GM12878 (cell line): ENCODE measurements at regions of chr10 and their contacts with region 1.

Region 1: GRCh38 chr10:102641880-102642735 is 2.2 kb upstream of the TRIM8 start:
- DNase-seq: peak; percentile 90
- ATAC-seq: peak; percentile 69
- H3K4me3 ChIP-seq: peak overlapping the region; percentile 93
- H3K27ac ChIP-seq: peak overlapping the region; percentile 96
- H3K4me1 ChIP-seq: peaks cover 7% of the 10 kb centered on the region
- H3K27me3 ChIP-seq: no peaks in the 10 kb centered on the region
- CTCF ChIP-seq: no peak
- EP300 ChIP-seq: no peak
- POLR2A ChIP-seq: peak; percentile 91
- RAD21 ChIP-seq: no peak

Region 2: GRCh38 chr10:102503281-102504220 is 138.6 kb before region 1 on chr10 and contains the start of gene SUFU:
- CTCF ChIA-PET with region 1: interaction called, 3 read pairs
- POLR2A ChIA-PET with region 1: interaction called, 5 read pairs
- RAD21 ChIA-PET with region 1: interaction called, 11 read pairs
- SMC1A ChIA-PET with region 1: interaction called, 3 read pairs
- in situ Hi-C with region 1: no loop called
- intact Hi-C with region 1: loop called (anchors 1 kb)
- DNase-seq: peak; percentile 93
- ATAC-seq: peak; percentile 82
- H3K4me3 ChIP-seq: peak within 1 kb of the TSS; percentile 88
- H3K27ac ChIP-seq: peak within 1 kb of the TSS; percentile 72; the same call in 1 of the 2 replicates
- H3K4me1 ChIP-seq: peaks cover 7% of the 10 kb centered on the region
- H3K27me3 ChIP-seq: no peaks in the 10 kb centered on the region
- CTCF ChIP-seq: peak; percentile 82 to 98 (median 89); a peak in 5 of 6 replicates
- EP300 ChIP-seq: no peak
- POLR2A ChIP-seq: peak; percentile 92
- RAD21 ChIP-seq: peak; percentile 88
- polyA plus RNA-seq, gene SUFU: 0.68 to 0.84 TPM

Region 3: GRCh38 chr10:102517553-102517952 is 124.6 kb before region 1 on chr10:
- CTCF ChIA-PET with region 1: no interaction called
- POLR2A ChIA-PET with region 1: no interaction called
- RAD21 ChIA-PET with region 1: no interaction called
- SMC1A ChIA-PET with region 1: no interaction called
- in situ Hi-C with region 1: no loop called
- intact Hi-C with region 1: no loop called
- DNase-seq: no peak
- ATAC-seq: no peak
- H3K4me3 ChIP-seq: no peak overlapping the region
- H3K27ac ChIP-seq: no peak overlapping the region
- H3K4me1 ChIP-seq: no peaks in the 10 kb centered on the region
- H3K27me3 ChIP-seq: no peaks in the 10 kb centered on the region
- CTCF ChIP-seq: no peak
- EP300 ChIP-seq: no peak
- POLR2A ChIP-seq: no peak
- RAD21 ChIP-seq: no peak

Region 4: DNA sequence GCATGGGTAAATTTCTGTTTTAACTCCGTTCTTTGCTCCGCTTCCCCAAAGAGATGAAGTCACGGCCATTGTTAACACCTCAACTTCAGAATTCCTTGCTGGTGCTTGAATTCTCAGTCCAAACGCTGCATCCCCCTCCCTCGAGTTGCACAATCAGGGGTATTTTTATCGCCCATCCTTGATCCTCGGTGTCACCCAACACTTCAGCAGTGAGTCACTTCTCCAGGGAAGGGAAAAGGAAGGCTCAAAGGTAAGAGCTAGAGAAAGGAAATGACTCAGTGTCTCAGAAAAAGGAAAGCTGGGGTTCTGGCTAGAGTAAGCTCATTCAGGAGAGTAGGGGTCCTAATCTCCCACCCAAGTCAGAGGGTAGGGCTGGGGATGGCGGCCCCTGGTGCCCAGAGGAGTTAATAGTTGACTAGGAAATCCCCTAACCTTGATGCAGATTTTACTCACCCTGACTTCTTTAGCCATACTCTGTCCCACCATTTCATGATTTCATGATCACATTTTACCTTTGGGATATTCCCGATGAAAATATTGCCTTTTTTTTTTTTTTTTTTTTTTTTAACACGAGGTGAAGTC is 37.6 kb before region 1 on chr10:
- CTCF ChIA-PET with region 1: interaction called, 8 read pairs
- POLR2A ChIA-PET with region 1: interaction called, 10 read pairs
- RAD21 ChIA-PET with region 1: interaction called, 7 read pairs
- SMC1A ChIA-PET with region 1: interaction called, 4 read pairs
- in situ Hi-C with region 1: no loop called
- intact Hi-C with region 1: no loop called
- DNase-seq: no peak
- ATAC-seq: peak; percentile 62
- H3K4me3 ChIP-seq: no peak overlapping the region
- H3K27ac ChIP-seq: no peak overlapping the region
- H3K4me1 ChIP-seq: peaks cover 6% of the 10 kb centered on the region
- H3K27me3 ChIP-seq: no peaks in the 10 kb centered on the region
- CTCF ChIP-seq: no peak
- EP300 ChIP-seq: no peak
- POLR2A ChIP-seq: no peak
- RAD21 ChIP-seq: no peak

Region 5: GRCh38 chr10:102652170-102652916 is 10.2 kb after region 1 on chr10:
- CTCF ChIA-PET with region 1: interaction called, 3 read pairs
- POLR2A ChIA-PET with region 1: interaction called, 13 read pairs
- RAD21 ChIA-PET with region 1: interaction called, 10 read pairs
- SMC1A ChIA-PET with region 1: interaction called, 6 read pairs
- in situ Hi-C with region 1: no loop called
- intact Hi-C with region 1: no loop called
- DNase-seq: peak; percentile 75
- ATAC-seq: peak; percentile 61
- H3K4me3 ChIP-seq: peak overlapping the region; percentile 62
- H3K27ac ChIP-seq: peak overlapping the region; percentile 96
- H3K4me1 ChIP-seq: peaks cover 56% of the 10 kb centered on the region
- H3K27me3 ChIP-seq: no peaks in the 10 kb centered on the region
- CTCF ChIP-seq: no peak
- EP300 ChIP-seq: peak in 1 of 2 experiments; percentile 44; a peak in 2 of 4 replicates
- POLR2A ChIP-seq: no peak
- RAD21 ChIP-seq: no peak

Region 6: DNA sequence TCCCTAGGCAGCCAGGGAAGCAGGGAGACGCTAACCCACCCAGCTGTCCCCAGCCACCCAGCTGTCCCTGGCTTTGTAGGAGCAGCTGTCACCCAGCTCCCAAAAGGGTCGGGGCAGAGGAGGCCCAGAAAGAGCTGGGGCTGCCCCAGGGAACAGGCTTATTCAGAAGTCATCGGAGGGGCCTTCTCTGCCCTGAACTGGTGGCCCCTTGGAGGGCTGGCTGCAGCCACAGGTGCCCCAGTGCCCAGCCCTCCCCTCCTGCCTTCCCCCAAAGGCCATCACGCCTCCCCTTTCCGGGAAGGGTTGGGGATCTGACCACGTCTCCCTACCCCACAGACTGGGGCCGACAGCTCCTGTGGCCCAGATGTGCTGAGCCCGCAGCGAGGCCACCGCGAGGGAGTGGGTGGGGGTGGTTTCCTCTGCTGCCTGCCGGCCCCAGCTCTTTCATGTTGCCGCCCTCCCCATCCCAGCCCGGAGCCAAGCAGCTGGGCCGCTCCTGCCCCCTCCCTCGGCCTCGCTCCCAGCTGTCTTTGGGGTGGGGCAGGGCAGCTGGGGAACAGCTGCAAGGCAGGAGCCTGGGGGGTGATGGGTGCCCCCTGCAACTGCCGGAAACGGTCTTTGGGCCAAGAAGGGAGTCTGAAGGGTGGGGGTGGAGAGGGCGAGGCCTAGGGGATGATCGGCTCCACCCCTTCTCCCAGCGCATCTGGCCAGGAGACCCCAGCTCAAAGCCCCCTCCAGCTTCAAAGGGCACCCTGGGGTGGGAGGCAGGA is 19.0 kb after region 1 on chr10:
- CTCF ChIA-PET with region 1: interaction called, 11 read pairs
- POLR2A ChIA-PET with region 1: interaction called, 21 read pairs
- RAD21 ChIA-PET with region 1: interaction called, 29 read pairs
- SMC1A ChIA-PET with region 1: interaction called, 27 read pairs
- in situ Hi-C with region 1: no loop called
- intact Hi-C with region 1: no loop called
- DNase-seq: no peak
- ATAC-seq: peak; percentile 94
- H3K4me3 ChIP-seq: peak overlapping the region; percentile 27; the same call in 1 of the 2 replicates
- H3K27ac ChIP-seq: peak overlapping the region; percentile 83
- H3K4me1 ChIP-seq: peaks cover 22% of the 10 kb centered on the region
- H3K27me3 ChIP-seq: no peaks in the 10 kb centered on the region
- CTCF ChIP-seq: no peak
- EP300 ChIP-seq: peak in 1 of 2 experiments; percentile 73; a peak in 2 of 4 replicates
- POLR2A ChIP-seq: peak; percentile 82
- RAD21 ChIP-seq: peak; percentile 14; the same call in 1 of the 2 replicates

Region 7: DNA sequence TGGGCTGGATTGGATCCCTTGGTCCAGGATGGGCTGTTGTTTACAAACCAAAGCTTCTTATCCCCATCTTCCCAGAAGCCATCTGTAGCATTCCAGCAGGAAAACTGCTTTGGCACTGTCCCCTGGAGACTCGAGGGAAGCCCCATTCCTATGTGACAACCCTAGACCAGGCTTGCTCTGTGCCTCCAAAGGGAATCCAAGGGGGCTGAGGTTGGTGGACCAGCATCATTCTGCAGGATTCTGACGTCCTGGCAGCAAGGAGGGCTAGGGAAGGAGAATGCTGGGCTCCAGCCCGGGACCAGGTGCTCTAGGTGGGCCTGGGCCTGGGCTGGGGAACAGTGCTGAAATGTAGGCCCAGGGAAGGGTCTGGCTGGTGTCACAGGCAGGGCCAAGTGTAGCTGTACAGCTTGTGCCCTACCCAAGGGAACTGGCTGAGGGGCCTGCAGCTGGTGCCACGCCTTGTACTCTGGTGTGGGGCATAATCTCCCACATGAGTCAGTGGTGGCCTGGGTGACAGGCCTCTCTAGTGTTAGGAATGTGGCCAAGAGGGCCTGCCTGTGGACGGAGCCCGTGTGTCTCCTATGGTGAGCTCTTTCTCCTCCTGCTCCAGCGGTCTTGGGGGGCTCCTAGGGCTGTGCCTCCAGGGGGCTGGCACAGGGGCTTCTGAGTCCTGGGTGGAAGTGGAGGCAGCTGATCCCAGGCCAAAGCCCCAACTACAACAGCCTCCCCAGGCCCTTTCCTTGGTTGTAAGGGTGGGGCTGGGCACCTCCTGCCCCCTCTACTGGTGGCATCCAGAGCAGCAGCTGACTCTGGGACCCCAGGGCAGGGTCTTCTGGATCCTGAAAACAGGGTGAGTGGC is 27.3 kb after region 1 on chr10:
- CTCF ChIA-PET with region 1: interaction called, 128 read pairs
- POLR2A ChIA-PET with region 1: interaction called, 151 read pairs
- RAD21 ChIA-PET with region 1: interaction called, 57 read pairs
- SMC1A ChIA-PET with region 1: interaction called, 103 read pairs
- in situ Hi-C with region 1: no loop called
- intact Hi-C with region 1: no loop called
- DNase-seq: no peak
- ATAC-seq: peak; percentile 48
- H3K4me3 ChIP-seq: no peak overlapping the region
- H3K27ac ChIP-seq: no peak overlapping the region
- H3K4me1 ChIP-seq: peaks cover 8% of the 10 kb centered on the region
- H3K27me3 ChIP-seq: no peaks in the 10 kb centered on the region
- CTCF ChIP-seq: peak; percentile 25 to 44 (median 39); a peak in 5 of 6 replicates
- EP300 ChIP-seq: no peak
- POLR2A ChIP-seq: no peak
- RAD21 ChIP-seq: peak; percentile 38; the same call in 1 of the 2 replicates

Region 8: GRCh38 chr10:103192451-103193106 is 550.5 kb after region 1 on chr10:
- CTCF ChIA-PET with region 1: no interaction called
- POLR2A ChIA-PET with region 1: no interaction called
- RAD21 ChIA-PET with region 1: no interaction called
- SMC1A ChIA-PET with region 1: no interaction called
- in situ Hi-C with region 1: no loop called
- intact Hi-C with region 1: loop called (anchors 10 kb)
- DNase-seq: no peak
- ATAC-seq: peak; percentile 82
- H3K4me3 ChIP-seq: peak overlapping the region; percentile 85
- H3K27ac ChIP-seq: peak overlapping the region; percentile 92
- H3K4me1 ChIP-seq: peaks cover 7% of the 10 kb centered on the region
- H3K27me3 ChIP-seq: no peaks in the 10 kb centered on the region
- CTCF ChIP-seq: no peak
- EP300 ChIP-seq: no peak
- POLR2A ChIP-seq: peak; percentile 71
- RAD21 ChIP-seq: no peak